ENCODE measurements at regions of chr3 and their contacts with region 1.

Region 1: GRCh38 chr3:137013955-137014688 is 56.3 kb downstream of the IL20RB start:
- DNase-seq: peak; percentile 90
- ATAC-seq: peak; percentile 89
- H3K4me3 Mint-ChIP-seq: peak overlapping the region; percentile 67
- H3K27ac Mint-ChIP-seq: peak overlapping the region; percentile 57
- H3K4me1 Mint-ChIP-seq: peaks cover 7% of the 10 kb centered on the region
- H3K27me3 Mint-ChIP-seq: no peaks in the 10 kb centered on the region

Region 2: GRCh38 chr3:136250226-136250902 is 763.8 kb before region 1 on chr3 and contains the start of gene PCCB:
- CTCF ChIA-PET with region 1: interaction called, 3 read pairs
- POLR2A ChIA-PET with region 1: no interaction called
- intact Hi-C with region 1: loop called in 1 of 2 experiments (anchors 5 kb)
- DNase-seq: peak; percentile 96
- ATAC-seq: peak; percentile 99
- H3K4me3 Mint-ChIP-seq: peak within 1 kb of the TSS; percentile 83
- H3K27ac Mint-ChIP-seq: peak within 1 kb of the TSS; percentile 91
- H3K4me1 Mint-ChIP-seq: peaks cover 15% of the 10 kb centered on the region
- H3K27me3 Mint-ChIP-seq: no peaks in the 10 kb centered on the region
- total RNA-seq, gene PCCB: 45.3 to 51.8 TPM

Region 3: DNA sequence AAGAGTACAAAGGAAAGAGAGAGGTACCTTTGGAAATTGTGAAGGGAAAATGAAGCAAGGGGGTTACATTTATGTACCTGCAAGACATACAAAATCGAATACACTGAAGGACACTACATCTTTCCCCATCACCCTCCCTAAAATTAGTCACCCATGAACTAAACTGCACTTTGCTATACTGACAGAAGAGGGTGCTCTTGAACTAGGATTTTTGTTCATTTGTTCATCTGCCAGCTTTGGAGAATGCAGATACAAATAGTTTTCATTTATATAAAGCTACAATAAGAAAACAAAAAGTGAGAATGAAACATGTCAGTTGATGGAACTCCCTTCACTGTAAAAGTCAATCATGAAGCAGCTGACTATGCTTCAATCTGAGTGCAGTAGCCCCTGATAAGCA is 708.2 kb before region 1 on chr3:
- CTCF ChIA-PET with region 1: interaction called, 6 read pairs
- POLR2A ChIA-PET with region 1: no interaction called
- intact Hi-C with region 1: loop called (anchors 2 to 10 kb)
- DNase-seq: no peak
- ATAC-seq: peak; percentile 44
- H3K4me3 Mint-ChIP-seq: no peak overlapping the region
- H3K27ac Mint-ChIP-seq: no peak overlapping the region
- H3K4me1 Mint-ChIP-seq: no peaks in the 10 kb centered on the region
- H3K27me3 Mint-ChIP-seq: no peaks in the 10 kb centered on the region

Region 4: GRCh38 chr3:136390574-136390973 is 623.5 kb before region 1 on chr3:
- CTCF ChIA-PET with region 1: interaction called, 14 read pairs
- POLR2A ChIA-PET with region 1: no interaction called
- intact Hi-C with region 1: loop called (anchors 1 kb)
- DNase-seq: no peak
- ATAC-seq: no peak
- H3K4me3 Mint-ChIP-seq: no peak overlapping the region
- H3K27ac Mint-ChIP-seq: no peak overlapping the region
- H3K4me1 Mint-ChIP-seq: no peaks in the 10 kb centered on the region
- H3K27me3 Mint-ChIP-seq: no peaks in the 10 kb centered on the region

Region 5: GRCh38 chr3:136396916-136397315 is 617.2 kb before region 1 on chr3:
- CTCF ChIA-PET with region 1: interaction called, 14 read pairs
- POLR2A ChIA-PET with region 1: no interaction called
- intact Hi-C with region 1: loop called in 1 of 2 experiments (anchors 1 kb)
- DNase-seq: no peak
- ATAC-seq: no peak
- H3K4me3 Mint-ChIP-seq: no peak overlapping the region
- H3K27ac Mint-ChIP-seq: no peak overlapping the region
- H3K4me1 Mint-ChIP-seq: no peaks in the 10 kb centered on the region
- H3K27me3 Mint-ChIP-seq: no peaks in the 10 kb centered on the region

Region 6: DNA sequence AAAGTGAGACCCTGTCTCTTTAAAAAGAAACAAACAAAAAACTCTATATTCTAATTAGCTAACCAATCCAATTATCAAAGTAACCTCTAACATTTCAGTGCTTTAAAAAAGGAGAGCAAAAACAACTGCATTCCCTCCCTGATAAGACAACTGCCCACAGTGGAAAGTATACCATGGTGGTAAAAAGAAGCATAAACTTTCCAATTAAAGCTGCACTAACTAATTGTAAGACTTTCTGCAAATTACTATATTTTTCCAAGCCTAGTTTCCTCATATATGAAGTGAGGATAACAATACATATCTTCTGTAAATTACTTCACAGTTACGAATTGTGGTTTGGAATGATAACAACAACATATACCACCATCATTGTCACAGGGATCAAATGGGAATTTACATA is 297.5 kb before region 1 on chr3:
- CTCF ChIA-PET with region 1: no interaction called
- POLR2A ChIA-PET with region 1: no interaction called
- intact Hi-C with region 1: no loop called
- DNase-seq: no peak
- ATAC-seq: no peak
- H3K4me3 Mint-ChIP-seq: no peak overlapping the region
- H3K27ac Mint-ChIP-seq: no peak overlapping the region
- H3K4me1 Mint-ChIP-seq: peaks cover 21% of the 10 kb centered on the region
- H3K27me3 Mint-ChIP-seq: no peaks in the 10 kb centered on the region

Region 7: DNA sequence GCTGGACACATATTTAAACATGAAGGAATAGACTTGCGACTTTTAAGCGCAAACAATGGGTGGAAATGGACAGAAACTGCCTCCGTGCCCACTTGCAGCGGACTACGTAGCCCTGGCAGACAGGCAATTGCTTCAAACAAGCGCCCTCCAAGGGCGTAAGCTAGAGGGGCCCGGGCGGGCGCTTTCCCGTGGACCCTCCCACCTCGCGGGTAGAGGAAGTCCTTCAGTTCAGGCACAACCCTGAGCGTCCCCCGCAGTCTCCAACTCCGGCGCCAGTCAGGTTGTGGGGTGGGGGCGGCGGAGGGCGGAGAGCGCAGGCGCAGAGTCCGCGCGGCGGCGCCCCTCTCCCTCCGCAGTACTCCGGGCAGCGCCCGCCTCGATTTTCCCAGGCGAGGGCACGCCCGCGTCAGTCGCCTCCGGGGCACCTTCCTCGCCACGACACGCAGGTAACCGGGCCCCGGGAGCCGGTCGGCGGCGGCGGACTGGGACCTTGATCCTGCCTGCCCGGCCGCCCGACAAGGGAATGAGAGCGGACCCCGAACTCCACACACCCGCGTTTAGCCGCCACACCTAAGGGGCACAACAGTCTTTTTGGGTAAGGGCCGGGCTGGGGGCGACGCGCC is 195.2 kb before region 1 on chr3 and contains the start of gene SLC35G2:
- CTCF ChIA-PET with region 1: interaction called, 5 read pairs
- POLR2A ChIA-PET with region 1: no interaction called
- intact Hi-C with region 1: loop called (anchors 1 kb)
- DNase-seq: peak; percentile 62
- ATAC-seq: peak; percentile 47
- H3K4me3 Mint-ChIP-seq: peak within 1 kb of the TSS; percentile 72
- H3K27ac Mint-ChIP-seq: peak within 1 kb of the TSS; percentile 55
- H3K4me1 Mint-ChIP-seq: peaks cover 19% of the 10 kb centered on the region
- H3K27me3 Mint-ChIP-seq: peaks cover 29% of the 10 kb centered on the region
- total RNA-seq, gene SLC35G2: 1.7 to 2.0 TPM

Region 8: DNA sequence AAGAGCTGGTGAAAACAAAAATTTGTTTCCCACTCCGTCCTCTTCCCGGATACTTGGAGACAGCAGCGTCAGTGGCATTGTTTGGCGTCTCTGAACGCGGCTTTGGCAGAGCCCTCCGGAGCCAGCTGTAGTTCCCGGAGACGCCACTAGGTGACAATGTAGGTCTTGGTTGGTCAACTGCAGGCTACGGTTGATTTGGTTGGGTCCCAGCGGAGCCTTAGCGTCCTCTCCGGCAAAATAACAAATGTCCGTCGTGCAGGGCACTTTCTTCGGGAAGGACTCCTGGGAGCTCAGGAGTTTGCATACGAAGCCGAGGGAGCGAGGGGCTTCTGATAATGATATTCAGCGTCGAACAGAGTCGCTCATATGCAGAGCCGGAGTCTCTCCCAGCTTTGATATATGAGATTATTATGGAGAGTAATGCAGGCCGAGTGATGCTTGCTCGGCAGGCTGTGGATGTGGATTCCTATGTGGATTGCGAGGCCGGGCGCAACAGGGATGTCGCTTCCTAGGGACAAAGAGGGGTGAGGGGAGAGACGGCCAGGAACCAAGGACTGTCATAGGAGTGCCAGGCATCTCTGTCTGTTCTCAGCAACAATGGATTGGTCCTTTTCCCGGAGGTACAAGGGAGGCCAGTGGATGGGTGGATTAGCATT is 18.5 kb after region 1 on chr3:
- CTCF ChIA-PET with region 1: interaction called, 22 read pairs
- POLR2A ChIA-PET with region 1: interaction called, 5 read pairs
- intact Hi-C with region 1: no loop called
- DNase-seq: peak; percentile 92
- ATAC-seq: peak; percentile 93
- H3K4me3 Mint-ChIP-seq: peak overlapping the region; percentile 54
- H3K27ac Mint-ChIP-seq: no peak overlapping the region
- H3K4me1 Mint-ChIP-seq: peaks cover 7% of the 10 kb centered on the region
- H3K27me3 Mint-ChIP-seq: peaks cover 22% of the 10 kb centered on the region

Measured in activated CD4-positive, alpha-beta T cell treated with anti-CD3 and anti-CD28 coated beads for 36 hours (primary cell).